ENCODE measurements at regions of chr1 and their contacts with region 1.

Region 1: DNA sequence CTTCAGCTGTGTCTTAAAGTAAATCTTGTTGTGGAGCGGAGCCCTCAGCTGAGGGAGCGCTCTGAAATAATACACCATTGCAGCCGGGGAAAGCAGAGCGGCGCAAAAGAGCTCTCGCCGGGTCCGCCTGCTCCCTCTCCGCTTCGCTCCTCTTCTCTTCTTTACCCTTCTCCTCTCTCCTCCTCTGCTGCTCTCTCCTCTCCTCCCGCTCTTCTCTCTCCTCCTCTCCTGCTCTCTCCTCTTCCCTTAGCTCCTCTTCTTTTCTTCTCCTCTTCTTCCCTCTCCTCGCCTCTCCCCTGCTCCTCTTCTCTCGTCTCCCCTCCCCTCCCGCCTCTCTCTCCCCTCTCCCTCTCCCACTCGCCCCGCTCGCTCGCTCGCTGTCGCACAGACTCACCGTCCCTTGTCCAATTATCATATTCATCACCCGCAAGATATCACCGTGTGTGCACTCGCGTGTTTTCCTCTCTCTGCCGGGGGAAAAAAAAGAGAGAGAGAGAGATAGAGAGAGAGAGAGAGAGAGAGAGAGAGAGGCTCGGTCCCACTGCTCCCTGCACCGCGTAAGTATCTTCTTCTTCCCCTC is at the start of gene PROX1:
- DNase-seq: peak; percentile 73
- H3K4me3 Mint-ChIP-seq: peak within 1 kb of the TSS; percentile 83
- H3K27ac Mint-ChIP-seq: no peak within 1 kb of the TSS
- H3K4me1 Mint-ChIP-seq: peaks cover 44% of the 10 kb centered on the region
- H3K27me3 Mint-ChIP-seq: peaks cover 82% of the 10 kb centered on the region
- total RNA-seq, gene PROX1: 0.10 to 0.12 TPM

Region 2: GRCh38 chr1:213374369-213374768 is 613.6 kb before region 1 on chr1:
- CTCF ChIA-PET with region 1: no interaction called
- intact Hi-C with region 1: loop called (anchors 5 kb)
- DNase-seq: peak; percentile 78
- H3K4me3 Mint-ChIP-seq: no peak overlapping the region
- H3K27ac Mint-ChIP-seq: no peak overlapping the region
- H3K4me1 Mint-ChIP-seq: no peaks in the 10 kb centered on the region
- H3K27me3 Mint-ChIP-seq: no peaks in the 10 kb centered on the region

Region 3: DNA sequence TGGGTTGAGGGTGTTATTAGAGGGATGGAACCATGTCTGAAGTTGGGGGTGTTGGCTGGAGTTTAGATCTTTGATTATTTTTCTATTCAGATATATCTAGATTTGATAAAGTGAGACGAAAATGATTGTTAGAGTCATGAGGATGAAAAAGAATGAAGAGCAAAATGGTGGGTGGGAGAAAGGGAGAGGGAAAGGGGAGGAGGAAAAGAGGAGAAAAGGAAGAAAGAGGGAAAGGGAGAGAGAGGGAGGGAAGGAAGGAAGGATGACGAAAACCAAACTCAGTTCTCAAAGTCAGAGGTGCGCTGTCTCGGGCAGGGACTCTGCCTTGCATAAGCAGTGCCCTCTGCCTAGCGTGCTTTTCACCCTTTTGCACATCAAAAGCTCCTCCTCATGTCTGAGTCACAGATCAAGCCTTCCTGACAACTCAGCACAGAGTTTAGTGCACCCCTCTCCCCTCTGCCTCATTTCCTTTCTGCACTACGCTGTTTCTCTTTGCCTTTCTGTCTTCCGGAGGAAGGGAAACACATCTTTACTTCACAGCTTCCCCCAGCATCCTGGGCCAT is 226.1 kb before region 1 on chr1:
- CTCF ChIA-PET with region 1: no interaction called
- intact Hi-C with region 1: loop called (anchors 2 kb)
- DNase-seq: peak; percentile 81
- H3K4me3 Mint-ChIP-seq: peak overlapping the region; percentile 22
- H3K27ac Mint-ChIP-seq: peak overlapping the region; percentile 83
- H3K4me1 Mint-ChIP-seq: peaks cover 17% of the 10 kb centered on the region
- H3K27me3 Mint-ChIP-seq: no peaks in the 10 kb centered on the region

Region 4: DNA sequence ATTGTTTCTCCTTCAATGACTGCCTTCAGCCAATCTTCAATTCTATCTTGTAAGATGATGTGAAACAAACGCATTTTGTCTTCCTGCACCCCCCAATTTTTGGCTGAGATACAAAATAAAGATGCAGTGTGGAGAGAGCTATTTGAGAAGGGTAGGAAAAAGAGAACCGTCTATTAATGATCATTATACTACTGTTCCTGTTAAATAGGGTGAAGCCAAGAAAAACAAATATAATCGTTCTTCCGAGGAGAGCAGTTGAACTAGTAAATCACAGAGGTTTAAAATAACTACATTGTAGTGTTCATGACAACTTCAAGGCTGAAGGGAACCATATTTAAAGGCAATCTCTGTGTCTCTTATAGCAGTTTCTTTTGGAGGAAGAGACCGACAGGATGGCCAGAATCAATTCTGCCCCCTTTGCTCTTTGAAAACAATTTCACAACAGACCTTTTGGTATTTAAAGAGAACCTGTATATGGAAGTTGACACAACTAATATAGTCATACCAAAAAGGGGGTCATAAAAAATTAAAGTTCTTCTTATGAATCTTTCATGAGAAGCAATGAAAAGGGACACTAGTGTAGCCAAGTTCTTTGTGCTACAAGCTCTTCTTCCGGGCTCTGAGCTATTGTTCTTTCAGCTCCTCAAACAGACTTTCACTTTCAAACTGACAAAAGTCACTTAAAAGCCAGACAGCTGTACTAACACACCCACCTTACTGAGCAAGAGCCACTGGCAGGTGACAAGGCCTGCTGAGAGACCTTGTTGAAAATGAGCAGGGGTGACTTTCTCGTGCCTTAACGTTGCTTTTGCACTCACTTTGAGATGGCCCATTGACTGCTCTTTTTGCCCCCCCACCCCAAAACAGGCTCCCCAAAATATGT is 30.6 kb after region 1 on chr1:
- CTCF ChIA-PET with region 1: no interaction called
- intact Hi-C with region 1: loop called (anchors 2 kb)
- DNase-seq: peak; percentile 27
- H3K4me3 Mint-ChIP-seq: no peak overlapping the region
- H3K27ac Mint-ChIP-seq: no peak overlapping the region
- H3K4me1 Mint-ChIP-seq: peaks cover 9% of the 10 kb centered on the region
- H3K27me3 Mint-ChIP-seq: no peaks in the 10 kb centered on the region

Region 5: DNA sequence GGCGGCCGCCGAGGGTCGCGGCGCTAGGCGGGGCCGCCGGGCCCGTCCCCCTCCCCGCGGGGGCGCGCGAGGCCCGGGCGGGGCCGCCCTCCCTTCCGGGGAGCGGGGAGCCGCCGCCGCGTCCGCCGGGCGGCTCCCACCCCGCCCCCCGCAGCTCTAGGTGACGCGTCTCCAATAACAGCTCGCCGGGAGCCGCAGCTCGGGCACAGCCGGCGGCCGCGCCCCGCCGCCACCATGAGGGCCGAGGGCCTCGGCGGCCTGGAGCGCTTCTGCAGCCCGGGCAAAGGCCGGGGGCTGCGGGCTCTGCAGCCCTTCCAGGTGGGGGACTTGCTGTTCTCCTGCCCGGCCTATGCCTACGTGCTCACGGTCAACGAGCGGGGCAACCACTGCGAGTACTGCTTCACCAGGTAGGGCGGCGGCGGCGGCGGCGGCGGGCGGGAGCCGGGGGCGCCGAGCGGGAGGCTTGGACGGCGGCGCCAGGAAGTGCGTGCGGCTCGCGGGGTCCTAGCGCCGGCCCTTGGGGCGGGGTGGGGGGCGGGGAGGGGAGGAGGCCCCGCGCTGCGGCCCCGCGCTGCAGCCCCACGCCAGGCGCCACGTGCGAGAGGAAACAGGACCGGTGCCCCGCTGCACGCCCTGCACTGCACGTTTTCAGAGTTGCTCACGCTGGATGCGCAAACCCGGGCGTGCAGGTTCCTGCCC is 293.2 kb after region 1 on chr1 and contains the start of gene SMYD2:
- CTCF ChIA-PET with region 1: no interaction called
- intact Hi-C with region 1: loop called (anchors 10 kb)
- DNase-seq: peak; percentile 66
- H3K4me3 Mint-ChIP-seq: peak within 1 kb of the TSS; percentile 87
- H3K27ac Mint-ChIP-seq: peak within 1 kb of the TSS; percentile 74
- H3K4me1 Mint-ChIP-seq: peaks cover 40% of the 10 kb centered on the region
- H3K27me3 Mint-ChIP-seq: no peaks in the 10 kb centered on the region
- total RNA-seq, gene SMYD2: 33.4 to 38.4 TPM

Region 6: DNA sequence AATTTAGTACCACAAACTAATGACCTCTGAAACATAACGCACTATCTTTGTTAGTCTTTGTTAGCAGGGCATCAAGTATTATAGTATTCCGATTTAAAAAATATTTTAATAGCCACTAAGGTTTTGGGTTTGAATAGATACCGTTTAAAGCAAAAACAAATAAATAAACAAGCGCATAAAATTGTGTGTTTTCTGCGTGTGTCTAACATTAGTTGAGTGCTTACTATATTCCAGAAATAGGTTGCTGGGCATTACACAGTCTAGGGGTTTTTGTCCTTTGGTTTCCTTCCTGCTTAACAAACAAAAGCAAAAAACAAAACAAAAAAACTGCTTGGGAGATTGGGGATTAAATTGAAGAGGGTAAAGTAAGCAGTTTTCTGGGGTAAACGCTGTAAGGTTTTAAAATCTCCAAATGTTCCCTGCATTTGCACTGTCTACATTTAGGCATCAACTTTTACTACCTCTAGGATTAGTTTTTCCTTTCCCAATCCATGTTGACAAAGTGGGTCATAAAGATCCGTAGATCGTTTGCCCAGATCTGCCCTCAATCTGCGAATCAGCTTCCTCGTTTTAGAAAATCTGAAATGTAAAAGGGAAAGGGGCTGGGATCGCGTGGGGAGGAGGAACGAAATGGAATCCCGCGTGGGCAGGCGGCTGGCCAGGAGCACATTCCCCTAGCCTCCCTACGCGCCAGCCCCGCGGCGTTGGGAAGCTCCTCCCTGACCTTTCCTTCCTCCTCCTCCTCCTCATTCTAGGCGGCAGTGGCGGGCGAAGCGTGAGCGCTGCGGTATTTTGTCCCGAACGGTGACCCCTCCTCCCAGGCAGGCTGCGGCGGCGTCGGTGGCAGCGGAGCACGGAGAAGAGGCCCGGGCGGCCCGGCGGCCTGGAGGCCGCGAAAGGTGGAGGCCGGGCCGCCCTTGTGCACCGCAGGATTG is 1578.8 kb after region 1 on chr1 and contains the start of gene KCTD3:
- CTCF ChIA-PET with region 1: no interaction called
- intact Hi-C with region 1: loop called (anchors 5 kb)
- DNase-seq: peak; percentile 72
- H3K4me3 Mint-ChIP-seq: peak within 1 kb of the TSS; percentile 93
- H3K27ac Mint-ChIP-seq: peak within 1 kb of the TSS; percentile 50
- H3K4me1 Mint-ChIP-seq: peaks cover 24% of the 10 kb centered on the region
- H3K27me3 Mint-ChIP-seq: peaks cover 10% of the 10 kb centered on the region
- total RNA-seq, gene KCTD3: 3.2 to 3.5 TPM

Measured in activated naive CD4-positive, alpha-beta T cell treated with anti-CD3 and anti-CD28 coated beads for 36 hours (primary cell).